ENCODE measurements at regions of chrX and their contacts with region 1.

Region 1: DNA sequence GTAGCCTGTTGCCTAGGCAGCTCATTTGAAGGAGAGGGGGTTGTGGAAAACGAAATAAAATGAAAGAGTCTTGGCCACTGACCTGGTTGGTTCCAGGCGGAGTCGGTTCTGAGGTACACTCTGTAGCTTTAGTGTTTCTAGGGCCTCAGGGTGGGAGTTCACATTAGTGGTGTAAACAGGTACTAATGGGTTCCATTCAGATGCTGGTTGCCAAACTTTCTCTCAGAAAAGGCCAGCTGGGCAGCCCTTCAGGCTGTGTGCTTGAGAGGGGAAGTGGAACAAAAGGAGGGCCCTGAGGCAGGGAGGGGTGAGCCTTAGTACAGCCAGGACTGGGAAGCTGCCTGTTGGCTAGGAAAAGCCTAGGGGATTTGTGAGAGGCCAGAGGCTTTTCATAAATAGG is 24.8 kb downstream of the NHSL2 start:
- DNase-seq: no peak
- ATAC-seq: no peak
- H3K4me3 ChIP-seq: no peak overlapping the region
- H3K27ac ChIP-seq: no peak overlapping the region
- H3K4me1 ChIP-seq: no peaks in the 10 kb centered on the region
- H3K27me3 ChIP-seq: peaks cover 23% of the 10 kb centered on the region
- CTCF ChIP-seq: no peak

Region 2: DNA sequence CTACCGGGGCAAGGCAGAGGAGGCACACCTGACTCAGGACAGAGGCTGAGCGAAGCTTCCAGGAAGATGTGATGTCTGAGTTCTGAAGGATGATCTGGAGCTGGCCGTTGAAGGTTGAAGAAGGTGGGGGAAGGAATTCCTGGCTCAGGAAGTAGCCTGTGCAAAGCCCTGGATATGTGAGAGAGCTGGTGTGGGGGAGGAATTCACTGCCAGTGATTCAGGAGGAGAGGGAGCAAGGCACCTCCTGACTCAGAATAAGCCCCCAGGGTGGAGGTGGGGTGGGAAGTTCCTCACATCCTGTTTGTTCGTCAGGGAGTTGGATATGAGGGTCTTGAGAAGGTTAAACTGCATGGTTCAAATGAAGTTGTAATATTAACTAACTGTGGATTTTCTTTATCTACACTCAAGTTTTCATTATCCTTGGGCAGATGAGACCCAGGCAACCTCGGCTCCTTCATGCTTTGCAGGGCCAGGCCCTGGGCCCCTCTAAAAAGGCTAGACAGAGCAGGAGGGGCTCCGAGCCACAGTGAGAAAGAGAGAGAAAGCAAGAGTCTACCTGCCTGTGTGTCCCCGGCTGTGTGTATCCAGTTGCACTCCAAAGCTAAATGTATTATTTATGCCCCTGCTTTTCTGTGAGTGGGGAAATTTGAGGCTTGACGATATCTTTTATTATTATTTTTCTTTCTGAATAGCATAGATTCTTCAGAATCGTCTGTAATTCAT is 17.7 kb before region 1 on chrX:
- CTCF ChIA-PET with region 1: no interaction called
- POLR2A ChIA-PET with region 1: no interaction called
- intact Hi-C with region 1: loop called (anchors 1 kb)
- DNase-seq: peak; percentile 52
- ATAC-seq: peak; percentile 57; the same call in 1 of the 2 replicates
- H3K4me3 ChIP-seq: no peak overlapping the region
- H3K27ac ChIP-seq: peak overlapping the region; percentile 41
- H3K4me1 ChIP-seq: peaks cover 10% of the 10 kb centered on the region
- H3K27me3 ChIP-seq: 0 out of 2 replicates have a peak, but pooled peaks cover 3% of the 10 kb centered on the region
- CTCF ChIP-seq: no peak

Region 3: GRCh38 chrX:71953946-71954345 is 18.5 kb after region 1 on chrX:
- CTCF ChIA-PET with region 1: no interaction called
- POLR2A ChIA-PET with region 1: interaction called, 11 read pairs
- intact Hi-C with region 1: no loop called
- DNase-seq: no peak
- ATAC-seq: no peak
- H3K4me3 ChIP-seq: no peak overlapping the region
- H3K27ac ChIP-seq: no peak overlapping the region
- H3K4me1 ChIP-seq: no peaks in the 10 kb centered on the region
- H3K27me3 ChIP-seq: 0 out of 2 replicates have a peak, but pooled peaks cover 12% of the 10 kb centered on the region
- CTCF ChIP-seq: no peak